ENCODE measurements at regions of chr4 and their contacts with region 1.

Region 1: DNA sequence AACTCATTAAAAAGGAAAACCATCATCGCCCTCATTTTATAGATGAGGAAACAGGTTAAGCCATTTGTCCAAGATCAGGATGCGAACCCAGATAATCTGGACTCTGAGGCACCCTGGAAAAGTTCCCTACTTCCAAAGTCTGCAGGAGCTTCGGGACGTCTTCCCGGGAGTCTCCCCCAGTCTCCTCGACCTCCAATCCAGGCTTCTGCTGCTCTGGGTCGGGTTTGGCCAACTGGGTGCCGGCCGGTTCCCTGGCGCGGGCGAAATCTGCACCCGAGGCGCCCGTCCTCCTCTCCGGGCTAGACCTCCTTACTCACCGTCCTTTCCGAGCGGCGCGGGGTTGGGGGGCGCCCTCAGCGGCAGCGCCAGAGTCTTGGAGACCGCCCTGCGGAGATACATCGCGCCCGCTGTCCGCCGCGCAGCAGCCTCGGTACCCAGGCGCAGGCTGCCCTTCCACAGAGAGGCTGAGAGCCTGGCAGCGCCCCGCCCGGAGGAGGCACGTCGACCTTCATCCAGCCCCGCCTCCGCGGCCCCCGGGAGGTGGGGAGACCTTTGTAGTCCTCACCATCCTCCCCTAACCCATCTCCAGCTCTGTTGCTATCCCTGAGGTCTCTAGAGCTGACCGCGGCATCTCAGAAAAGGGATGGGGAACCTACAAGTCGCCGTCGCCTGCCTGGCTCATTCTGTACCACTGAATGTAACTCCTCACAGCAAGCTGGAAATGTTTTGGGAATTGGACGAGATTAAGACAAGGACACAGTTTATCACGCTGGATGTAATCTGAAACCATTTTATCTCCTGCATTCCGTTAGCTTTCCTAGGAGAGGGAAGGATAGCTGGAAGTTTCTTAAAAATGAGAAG is at the start of gene MGARP:
- DNase-seq: peak; percentile 53
- ATAC-seq: peak; percentile 74
- H3K4me3 ChIP-seq: peak within 1 kb of the TSS; percentile 32 to 75 (median 56)
- H3K4me3 Mint-ChIP-seq: peak within 1 kb of the TSS; percentile 88
- H3K27ac ChIP-seq: no peak within 1 kb of the TSS
- H3K27ac Mint-ChIP-seq: no peak within 1 kb of the TSS
- H3K4me1 ChIP-seq: peaks cover 17 to 19% of the 10 kb centered on the region in 2 donors
- H3K4me1 Mint-ChIP-seq: peaks cover 18% of the 10 kb centered on the region
- H3K27me3 ChIP-seq: peaks cover 0 to 38% (median 32%) of the 10 kb centered on the region in 4 experiments
- H3K27me3 Mint-ChIP-seq: peaks cover 40% of the 10 kb centered on the region
- CTCF ChIP-seq: no peak
- total RNA-seq, gene MGARP: not detected in 2 replicates

Region 2: GRCh38 chr4:139266583-139267257 is 13.3 kb before region 1 on chr4:
- CTCF ChIA-PET with region 1: interaction called, 6 read pairs
- POLR2A ChIA-PET with region 1: no interaction called
- intact Hi-C with region 1: loop called (anchors 2 kb)
- DNase-seq: peak; percentile 76
- ATAC-seq: peak; percentile 97
- H3K4me3 ChIP-seq: peak overlapping the region in 4 of 5 experiments; percentile 14 to 50 (median 35)
- H3K4me3 Mint-ChIP-seq: peak overlapping the region; percentile 80
- H3K27ac ChIP-seq: no peak overlapping the region
- H3K27ac Mint-ChIP-seq: peak overlapping the region; percentile 51
- H3K4me1 ChIP-seq: peaks cover 10 to 11% of the 10 kb centered on the region in 2 donors
- H3K4me1 Mint-ChIP-seq: peaks cover 13% of the 10 kb centered on the region
- H3K27me3 ChIP-seq: no peaks in the 10 kb centered on the region
- H3K27me3 Mint-ChIP-seq: no peaks in the 10 kb centered on the region
- CTCF ChIP-seq: no peak

Region 3: GRCh38 chr4:139295206-139295941 is 15.4 kb after region 1 on chr4:
- CTCF ChIA-PET with region 1: interaction called, 27 read pairs
- POLR2A ChIA-PET with region 1: no interaction called
- intact Hi-C with region 1: loop called (anchors 2 kb)
- DNase-seq: peak; percentile 96
- ATAC-seq: peak; percentile 98
- H3K4me3 ChIP-seq: peak overlapping the region; percentile 78 to 96 (median 91)
- H3K4me3 Mint-ChIP-seq: peak overlapping the region; percentile 97
- H3K27ac ChIP-seq: peak overlapping the region; percentile 89 to 92
- H3K27ac Mint-ChIP-seq: peak overlapping the region; percentile 96
- H3K4me1 ChIP-seq: peaks cover 16 to 23% of the 10 kb centered on the region in 2 donors
- H3K4me1 Mint-ChIP-seq: peaks cover 26% of the 10 kb centered on the region
- H3K27me3 ChIP-seq: no peaks in the 10 kb centered on the region
- H3K27me3 Mint-ChIP-seq: no peaks in the 10 kb centered on the region
- CTCF ChIP-seq: peak; percentile 93

Measured in B cell (primary cell).